BJ (cell line): ENCODE measurements at regions of chr18 and their contacts with region 1.

Region 1: DNA sequence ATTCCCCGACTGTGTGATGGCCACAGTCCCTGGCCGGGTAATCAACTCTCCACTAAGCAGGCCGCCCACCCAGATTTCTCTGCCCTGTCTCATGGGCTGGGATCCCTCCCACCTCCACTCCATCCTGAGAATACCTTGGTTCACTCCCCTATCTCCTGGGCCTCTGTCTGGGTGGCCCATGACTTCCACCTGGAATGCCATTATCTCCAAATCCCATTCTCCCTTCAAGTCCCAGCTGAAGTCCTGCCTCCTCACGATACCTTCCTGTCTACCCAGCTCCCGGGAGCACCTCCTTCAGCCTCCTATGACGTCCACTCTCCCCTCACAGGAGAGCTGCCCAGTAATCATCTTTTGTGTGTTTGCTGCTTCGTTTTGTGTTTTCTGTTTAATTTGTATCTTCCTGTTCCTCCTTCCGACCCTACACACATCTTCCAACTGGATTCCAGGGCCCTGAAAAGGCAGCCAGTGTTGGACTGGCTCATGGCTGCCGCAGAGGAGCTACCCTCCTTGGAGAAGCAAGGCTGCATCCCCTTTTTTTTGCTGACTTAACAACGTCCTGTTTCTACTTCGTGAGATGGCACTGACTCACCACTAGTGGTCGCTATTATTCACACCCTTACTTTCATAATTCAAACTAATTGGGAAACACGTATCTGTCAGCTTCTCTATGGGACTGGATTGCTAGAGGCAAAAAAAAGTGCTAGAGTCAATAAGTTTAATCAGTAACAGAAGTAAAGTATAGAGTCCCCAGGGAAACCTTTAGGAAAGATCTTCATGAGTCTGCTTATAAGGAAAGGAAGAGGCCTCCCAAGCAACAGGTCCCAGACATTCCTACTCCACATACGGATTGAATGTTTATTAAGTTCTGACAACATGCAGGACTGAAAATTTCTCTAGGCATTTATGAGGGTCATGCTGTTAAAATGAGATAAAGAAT is 171.9 kb upstream of the GATA6 start:
- DNase-seq: peak; percentile 4
- H3K4me3 ChIP-seq: no peak overlapping the region
- H3K27me3 ChIP-seq: no peaks in the 10 kb centered on the region
- CTCF ChIP-seq: peak; percentile 77

Region 2: DNA sequence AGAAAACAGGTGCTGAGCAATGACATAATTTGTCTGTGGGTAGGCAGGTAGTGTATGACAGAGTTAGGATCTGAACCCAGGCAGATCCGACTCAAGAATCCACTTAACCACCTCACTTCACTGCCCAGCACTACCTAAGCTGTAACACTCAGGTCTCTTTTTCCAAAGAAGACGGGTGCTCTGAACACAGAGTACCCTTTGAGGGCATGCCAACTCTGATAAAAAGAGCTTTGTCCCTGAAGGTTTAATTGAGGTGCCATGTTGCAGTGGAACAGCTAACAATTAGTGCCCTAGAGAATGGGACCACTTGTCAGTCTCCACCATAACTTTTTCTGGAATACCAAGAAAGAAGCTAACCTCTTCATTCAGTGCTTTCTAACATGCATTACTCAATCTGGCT is 304.2 kb before region 1 on chr18:
- CTCF ChIA-PET with region 1: no interaction called
- POLR2A ChIA-PET with region 1: no interaction called
- DNase-seq: no peak
- H3K4me3 ChIP-seq: no peak overlapping the region
- H3K27me3 ChIP-seq: no peaks in the 10 kb centered on the region
- CTCF ChIP-seq: no peak

Region 3: DNA sequence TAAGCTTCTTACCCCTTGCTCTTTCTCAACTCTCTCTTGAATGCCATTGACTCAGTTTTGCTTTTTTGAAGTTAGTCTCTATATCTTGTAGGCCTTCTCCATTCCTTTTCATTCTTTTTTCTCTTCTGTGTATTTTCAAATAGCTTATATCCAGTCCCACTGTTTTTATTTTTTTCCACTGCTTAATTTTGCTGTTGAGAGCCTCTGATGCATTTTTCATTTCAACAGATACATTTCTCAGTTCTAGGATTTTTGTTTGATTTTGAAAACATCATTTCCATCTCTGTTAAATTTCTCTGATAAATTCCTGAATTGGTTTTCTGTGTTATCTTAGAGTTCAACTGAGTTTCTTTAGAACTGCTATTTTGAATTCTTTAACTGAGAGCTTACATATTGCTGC is 210.9 kb before region 1 on chr18:
- CTCF ChIA-PET with region 1: no interaction called
- POLR2A ChIA-PET with region 1: no interaction called
- DNase-seq: no peak
- H3K4me3 ChIP-seq: no peak overlapping the region
- H3K27me3 ChIP-seq: no peaks in the 10 kb centered on the region
- CTCF ChIP-seq: no peak

Region 4: DNA sequence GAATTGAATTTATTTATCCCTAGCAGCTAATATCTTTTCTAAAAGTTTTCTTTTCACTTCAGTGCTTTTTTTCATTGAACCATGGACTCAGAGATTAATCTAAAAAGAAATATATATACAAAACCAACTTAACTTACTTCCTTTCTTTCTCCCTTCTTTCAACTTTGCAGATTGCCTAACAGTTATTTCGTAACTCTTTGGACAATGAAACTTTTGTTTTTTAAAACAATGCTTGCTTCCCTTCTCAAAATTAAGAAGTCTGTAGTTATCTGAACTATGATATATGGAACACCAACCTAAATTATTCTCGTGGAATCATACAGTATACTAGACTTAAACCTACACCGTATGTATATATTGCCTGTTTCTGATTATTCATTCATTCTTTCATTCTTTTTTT is 194.0 kb before region 1 on chr18:
- CTCF ChIA-PET with region 1: no interaction called
- POLR2A ChIA-PET with region 1: no interaction called
- DNase-seq: no peak
- H3K4me3 ChIP-seq: no peak overlapping the region
- H3K27me3 ChIP-seq: no peaks in the 10 kb centered on the region
- CTCF ChIP-seq: no peak

Region 5: DNA sequence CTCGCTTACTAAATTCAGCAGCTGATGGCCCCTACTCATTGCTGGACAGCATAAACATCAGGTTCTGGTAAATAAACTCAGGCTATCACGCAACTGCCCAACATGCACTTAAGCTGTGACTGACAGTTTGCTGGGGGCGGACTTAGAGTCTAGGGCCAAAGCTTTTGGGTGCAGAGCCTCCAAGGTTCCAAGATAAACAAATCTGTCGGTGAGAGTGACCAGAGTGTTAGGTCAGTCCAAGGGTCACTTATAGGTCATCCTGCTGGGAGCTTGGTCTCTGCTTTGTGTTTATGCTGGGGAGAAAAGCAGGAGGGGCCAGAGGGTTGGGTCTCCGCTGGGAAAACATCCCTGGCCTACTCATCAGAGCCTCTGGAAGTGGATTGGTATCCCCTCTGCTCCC is 16.7 kb before region 1 on chr18:
- CTCF ChIA-PET with region 1: interaction called, 11 read pairs
- POLR2A ChIA-PET with region 1: no interaction called
- DNase-seq: no peak
- H3K4me3 ChIP-seq: no peak overlapping the region
- H3K27me3 ChIP-seq: peaks cover 3% of the 10 kb centered on the region; the same call in 1 of the 2 replicates
- CTCF ChIP-seq: no peak

Region 6: GRCh38 chr18:22013993-22014392 is 16.5 kb after region 1 on chr18:
- CTCF ChIA-PET with region 1: interaction called, 12 read pairs
- POLR2A ChIA-PET with region 1: no interaction called
- DNase-seq: no peak
- H3K4me3 ChIP-seq: no peak overlapping the region
- H3K27me3 ChIP-seq: no peaks in the 10 kb centered on the region
- CTCF ChIP-seq: no peak

Region 7: DNA sequence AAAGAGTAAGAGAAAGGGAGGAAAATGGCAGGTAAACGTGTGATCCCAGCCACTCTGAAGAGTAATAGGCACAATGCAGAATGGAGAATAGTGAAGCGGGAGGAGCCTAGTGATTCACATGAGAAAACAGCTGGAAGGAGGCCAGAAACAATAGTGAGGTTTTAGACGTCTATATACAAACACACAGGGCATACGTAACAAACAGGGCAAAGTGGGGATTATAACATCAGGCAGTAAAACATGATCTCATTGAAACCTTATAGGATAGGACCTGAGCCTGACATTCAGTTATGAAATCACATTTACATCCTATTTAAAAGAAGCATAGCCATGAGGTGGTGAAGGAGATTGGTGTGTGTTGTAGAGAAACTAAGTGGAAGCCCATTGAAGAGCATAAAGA is 138.9 kb after region 1 on chr18:
- CTCF ChIA-PET with region 1: no interaction called
- POLR2A ChIA-PET with region 1: no interaction called
- DNase-seq: no peak
- H3K4me3 ChIP-seq: no peak overlapping the region
- H3K27me3 ChIP-seq: no peaks in the 10 kb centered on the region
- CTCF ChIP-seq: no peak